Activated CD8-positive, alpha-beta T cell treated with anti-CD3 and anti-CD28 coated beads for 36 hours (primary cell): ENCODE measurements at regions of chr15 and their contacts with region 1.

Region 1: GRCh38 chr15:35078221-35078915 is 6.7 kb downstream of the NANOGP8 start:
- DNase-seq: peak; percentile 41
- ATAC-seq: peak; percentile 53
- H3K4me3 Mint-ChIP-seq: no peak overlapping the region
- H3K27ac Mint-ChIP-seq: no peak overlapping the region
- H3K4me1 Mint-ChIP-seq: no peaks in the 10 kb centered on the region
- H3K27me3 Mint-ChIP-seq: peaks cover 10% of the 10 kb centered on the region
- CTCF ChIP-seq: peak; percentile 75

Region 2: GRCh38 chr15:34927726-34928125 is 150.6 kb before region 1 on chr15:
- CTCF ChIA-PET with region 1: no interaction called
- POLR2A ChIA-PET with region 1: no interaction called
- intact Hi-C with region 1: no loop called
- DNase-seq: no peak
- ATAC-seq: no peak
- H3K4me3 Mint-ChIP-seq: no peak overlapping the region
- H3K27ac Mint-ChIP-seq: no peak overlapping the region
- H3K4me1 Mint-ChIP-seq: no peaks in the 10 kb centered on the region
- H3K27me3 Mint-ChIP-seq: no peaks in the 10 kb centered on the region
- CTCF ChIP-seq: no peak

Region 3: GRCh38 chr15:35067496-35068347 is 10.6 kb before region 1 on chr15:
- CTCF ChIA-PET with region 1: interaction called, 11 read pairs
- POLR2A ChIA-PET with region 1: no interaction called
- intact Hi-C with region 1: no loop called
- DNase-seq: no peak
- ATAC-seq: no peak
- H3K4me3 Mint-ChIP-seq: no peak overlapping the region
- H3K27ac Mint-ChIP-seq: no peak overlapping the region
- H3K4me1 Mint-ChIP-seq: no peaks in the 10 kb centered on the region
- H3K27me3 Mint-ChIP-seq: peaks cover 5% of the 10 kb centered on the region
- CTCF ChIP-seq: no peak

Region 4: GRCh38 chr15:35145336-35145735 is 67.0 kb after region 1 on chr15:
- CTCF ChIA-PET with region 1: no interaction called
- POLR2A ChIA-PET with region 1: no interaction called
- intact Hi-C with region 1: no loop called
- DNase-seq: no peak
- ATAC-seq: no peak
- H3K4me3 Mint-ChIP-seq: no peak overlapping the region
- H3K27ac Mint-ChIP-seq: no peak overlapping the region
- H3K4me1 Mint-ChIP-seq: no peaks in the 10 kb centered on the region
- H3K27me3 Mint-ChIP-seq: no peaks in the 10 kb centered on the region
- CTCF ChIP-seq: no peak

Region 5: GRCh38 chr15:35209838-35210237 is 131.5 kb after region 1 on chr15:
- CTCF ChIA-PET with region 1: interaction called, 4 read pairs
- POLR2A ChIA-PET with region 1: no interaction called
- intact Hi-C with region 1: loop called (anchors 10 kb)
- DNase-seq: no peak
- ATAC-seq: no peak
- H3K4me3 Mint-ChIP-seq: no peak overlapping the region
- H3K27ac Mint-ChIP-seq: no peak overlapping the region
- H3K4me1 Mint-ChIP-seq: no peaks in the 10 kb centered on the region
- H3K27me3 Mint-ChIP-seq: no peaks in the 10 kb centered on the region
- CTCF ChIP-seq: no peak